ENCODE measurements at regions of chrX and their contacts with region 1.

Region 1: DNA sequence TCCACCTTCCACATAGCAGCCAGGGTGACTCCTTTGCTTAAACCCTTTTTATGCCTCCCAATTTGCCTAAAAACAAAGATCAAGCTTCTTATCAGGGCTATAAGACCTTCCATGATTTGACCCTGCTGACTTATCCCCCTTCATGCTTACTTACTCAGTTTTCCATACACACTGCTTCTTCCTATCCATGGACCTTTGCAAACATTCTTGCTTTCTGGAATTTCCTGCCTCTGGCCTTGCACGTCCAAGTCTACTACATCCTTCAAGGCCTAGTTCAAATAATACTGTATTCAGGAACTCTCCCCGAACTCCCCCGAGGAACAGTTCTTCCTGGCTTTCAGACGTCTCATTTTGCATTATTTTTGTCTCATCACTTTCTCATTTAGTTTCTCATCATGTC is 31.8 kb downstream of the RAP2C start:
- DNase-seq: peak; percentile 73
- H3K4me3 ChIP-seq: no peak overlapping the region
- H3K27ac ChIP-seq: peak overlapping the region; percentile 52
- H3K4me1 ChIP-seq: peaks cover 21% of the 10 kb centered on the region
- H3K27me3 ChIP-seq: no peaks in the 10 kb centered on the region
- CTCF ChIP-seq: no peak
- POLR2A ChIP-seq: no peak

Region 2: DNA sequence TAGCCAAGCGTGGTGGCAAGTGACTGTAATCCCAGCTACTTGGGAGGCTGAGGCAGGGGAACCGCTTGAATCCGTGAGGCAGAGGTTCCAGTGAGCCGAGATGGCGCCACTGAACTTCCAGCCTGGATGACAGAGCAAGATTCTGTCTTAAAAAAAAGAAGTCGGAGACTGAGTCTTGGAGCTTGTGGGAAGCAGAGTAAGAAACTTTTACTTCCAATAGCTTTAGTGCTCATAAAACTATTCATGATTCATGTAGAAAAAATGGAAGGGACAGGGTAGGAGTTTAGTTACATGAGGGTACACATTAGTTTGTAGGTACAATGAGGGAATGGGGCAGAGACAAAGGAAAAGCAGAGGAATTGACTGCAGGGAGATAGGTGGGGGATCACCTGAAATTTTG is 12.5 kb after region 1 on chrX:
- CTCF ChIA-PET with region 1: no interaction called
- POLR2A ChIA-PET with region 1: no interaction called
- dilution Hi-C with region 1: no loop called
- intact Hi-C with region 1: loop called (anchors 2 kb)
- DNase-seq: no peak
- H3K4me3 ChIP-seq: no peak overlapping the region
- H3K27ac ChIP-seq: no peak overlapping the region
- H3K4me1 ChIP-seq: no peaks in the 10 kb centered on the region
- H3K27me3 ChIP-seq: no peaks in the 10 kb centered on the region
- CTCF ChIP-seq: no peak
- POLR2A ChIP-seq: no peak

Region 3: DNA sequence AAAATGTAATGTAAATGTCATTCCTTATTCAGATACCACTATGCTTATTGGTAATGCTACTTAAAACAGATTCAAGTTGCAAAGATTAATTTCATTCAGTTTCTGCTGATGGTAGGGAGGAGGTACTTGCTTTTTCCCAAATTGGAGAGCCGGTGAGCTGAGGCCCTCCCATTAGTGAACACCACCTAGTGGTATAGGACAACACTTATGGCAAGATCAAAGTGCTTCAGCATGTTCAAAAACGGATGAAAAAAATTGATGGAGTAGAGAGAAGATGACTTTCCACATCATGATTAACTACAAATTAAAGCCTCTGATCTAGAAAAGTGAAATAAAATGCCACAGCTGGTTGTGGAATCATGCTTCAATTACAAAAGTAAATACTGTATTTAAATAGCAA is 188.5 kb after region 1 on chrX:
- CTCF ChIA-PET with region 1: no interaction called
- POLR2A ChIA-PET with region 1: no interaction called
- dilution Hi-C with region 1: no loop called
- intact Hi-C with region 1: no loop called
- DNase-seq: peak; percentile 0
- H3K4me3 ChIP-seq: no peak overlapping the region
- H3K27ac ChIP-seq: no peak overlapping the region
- H3K4me1 ChIP-seq: no peaks in the 10 kb centered on the region
- H3K27me3 ChIP-seq: no peaks in the 10 kb centered on the region
- CTCF ChIP-seq: no peak
- POLR2A ChIP-seq: no peak